Right cardiac atrium (tissue), 5 donors: ENCODE measurements at regions of chr10 and their contacts with region 1.

Region 1: DNA sequence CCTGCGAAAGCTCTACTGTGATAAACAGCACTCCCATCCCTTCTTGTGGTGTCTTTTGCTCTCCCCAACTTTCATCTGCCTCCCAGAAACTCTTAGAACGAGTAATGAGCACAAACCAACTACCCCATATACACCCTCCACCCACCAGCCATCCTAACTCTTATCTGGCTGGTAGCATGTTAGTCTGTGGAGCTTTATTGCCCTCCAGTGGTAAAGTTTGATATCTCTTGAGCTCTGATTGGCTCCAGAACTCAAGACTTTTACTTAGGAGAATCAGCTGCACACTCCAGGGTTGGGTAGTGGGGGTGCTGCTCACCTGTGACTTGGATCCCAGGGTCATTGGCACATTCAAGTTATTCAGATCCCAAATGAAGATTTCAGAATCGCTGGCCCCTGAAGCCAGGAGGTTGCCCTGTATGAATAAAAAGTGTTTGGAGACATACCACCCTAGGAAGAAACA is 10.9 kb downstream of the SEC31B start:
- DNase-seq: no peak
- ATAC-seq: peak in 1 of 2 donors; percentile 45
- H3K4me3 ChIP-seq: no peak overlapping the region
- H3K27ac ChIP-seq: no peak overlapping the region
- H3K4me1 ChIP-seq: no peaks in the 10 kb centered on the region
- H3K27me3 ChIP-seq: no peaks in the 10 kb centered on the region

Region 2: DNA sequence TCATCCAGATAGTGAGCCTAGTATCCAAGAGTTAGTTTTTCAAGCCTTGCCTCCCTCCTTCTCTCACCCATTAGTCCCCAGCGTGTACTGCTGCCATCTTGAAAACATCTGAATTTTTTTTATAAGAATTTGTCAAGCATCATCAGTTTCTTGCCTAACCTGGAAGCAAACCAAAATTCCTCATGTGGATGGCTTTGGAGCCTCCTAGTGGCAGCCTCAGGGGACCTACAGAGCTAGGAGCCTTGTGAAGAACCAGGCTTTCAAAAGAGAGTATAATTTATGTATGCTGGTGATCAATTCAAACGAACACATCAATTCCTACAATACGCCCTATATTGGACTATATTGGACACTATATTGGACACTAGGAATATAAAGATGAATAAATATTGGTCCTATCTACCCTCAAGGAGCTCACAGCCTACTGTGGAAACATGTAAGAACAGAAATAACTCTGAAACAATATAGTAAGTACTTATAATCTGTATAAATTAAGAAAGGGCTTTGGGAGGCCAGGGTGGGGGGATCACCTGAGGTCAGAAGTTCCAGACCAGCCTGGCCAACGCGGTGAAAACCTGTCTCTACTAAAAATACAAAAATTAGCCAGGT is 1336.5 kb before region 1 on chr10:
- intact Hi-C with region 1: no loop called
- DNase-seq: no peak
- ATAC-seq: no peak
- H3K4me3 ChIP-seq: no peak overlapping the region
- H3K27ac ChIP-seq: no peak overlapping the region
- H3K4me1 ChIP-seq: no peaks in the 10 kb centered on the region
- H3K27me3 ChIP-seq: peaks cover 2% of the 10 kb centered on the region

Region 3: GRCh38 chr10:100338434-100339036 is 170.2 kb before region 1 on chr10:
- intact Hi-C with region 1: loop called in 2 of 4 experiments (anchors 10 kb)
- DNase-seq: peak; percentile 68 to 91 (median 89)
- ATAC-seq: peak; percentile 50 to 77
- H3K4me3 ChIP-seq: no peak overlapping the region
- H3K27ac ChIP-seq: no peak overlapping the region
- H3K4me1 ChIP-seq: peaks cover 5% of the 10 kb centered on the region
- H3K27me3 ChIP-seq: no peaks in the 10 kb centered on the region

Region 4: DNA sequence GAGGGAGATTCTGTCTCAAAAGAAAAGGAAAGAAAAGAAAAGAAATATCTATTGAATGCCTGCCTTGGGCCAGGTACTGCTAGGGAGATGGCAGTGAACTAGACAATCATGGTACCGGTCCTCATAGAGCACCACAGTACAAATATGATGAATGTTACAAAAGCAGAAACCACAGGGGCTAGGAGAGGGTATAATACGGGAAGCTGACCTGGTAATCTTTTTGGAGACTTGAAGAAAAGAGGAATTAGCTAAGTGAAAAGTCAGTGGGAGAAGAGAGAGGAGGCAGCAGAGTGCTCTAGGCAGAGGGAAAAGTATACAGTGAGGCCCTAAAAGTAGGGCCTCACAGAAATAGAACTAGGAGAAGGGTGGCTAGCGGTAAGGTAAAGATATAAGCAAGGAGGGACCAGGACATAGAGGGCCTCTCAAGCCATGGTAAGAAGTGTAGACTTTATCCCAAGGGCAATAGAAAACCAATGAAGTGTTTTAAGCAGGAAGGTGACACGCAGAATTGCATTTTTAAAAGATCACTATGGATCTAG is 88.7 kb before region 1 on chr10:
- intact Hi-C with region 1: no loop called
- DNase-seq: no peak
- ATAC-seq: no peak
- H3K4me3 ChIP-seq: no peak overlapping the region
- H3K27ac ChIP-seq: no peak overlapping the region
- H3K4me1 ChIP-seq: no peaks in the 10 kb centered on the region
- H3K27me3 ChIP-seq: no peaks in the 10 kb centered on the region

Region 5: DNA sequence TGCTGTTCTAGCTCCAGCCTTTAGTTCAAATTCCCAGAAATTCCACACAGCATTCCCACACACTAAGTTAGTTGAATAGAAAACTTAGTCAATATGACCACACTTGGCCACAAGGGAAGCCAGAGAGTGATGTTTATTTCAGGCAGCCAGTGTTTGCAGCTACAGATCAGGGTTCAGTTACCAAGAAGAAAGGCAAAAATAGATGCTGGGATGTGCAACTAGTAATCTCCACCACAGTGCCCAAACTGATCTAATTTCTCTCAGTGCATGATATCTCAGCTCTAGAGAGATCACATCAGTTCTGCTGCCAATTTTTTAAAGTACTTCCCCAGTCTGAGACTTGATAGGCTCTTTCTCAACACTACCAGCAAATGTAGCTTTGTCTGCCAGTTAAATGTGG is 421.6 kb after region 1 on chr10:
- intact Hi-C with region 1: no loop called
- DNase-seq: no peak
- ATAC-seq: peak in 1 of 2 donors; percentile 50
- H3K4me3 ChIP-seq: no peak overlapping the region
- H3K27ac ChIP-seq: no peak overlapping the region
- H3K4me1 ChIP-seq: no peaks in the 10 kb centered on the region
- H3K27me3 ChIP-seq: no peaks in the 10 kb centered on the region